Spleen (tissue), 13 donors: ENCODE measurements at regions of chr2 and their contacts with region 1.

Region 1: DNA sequence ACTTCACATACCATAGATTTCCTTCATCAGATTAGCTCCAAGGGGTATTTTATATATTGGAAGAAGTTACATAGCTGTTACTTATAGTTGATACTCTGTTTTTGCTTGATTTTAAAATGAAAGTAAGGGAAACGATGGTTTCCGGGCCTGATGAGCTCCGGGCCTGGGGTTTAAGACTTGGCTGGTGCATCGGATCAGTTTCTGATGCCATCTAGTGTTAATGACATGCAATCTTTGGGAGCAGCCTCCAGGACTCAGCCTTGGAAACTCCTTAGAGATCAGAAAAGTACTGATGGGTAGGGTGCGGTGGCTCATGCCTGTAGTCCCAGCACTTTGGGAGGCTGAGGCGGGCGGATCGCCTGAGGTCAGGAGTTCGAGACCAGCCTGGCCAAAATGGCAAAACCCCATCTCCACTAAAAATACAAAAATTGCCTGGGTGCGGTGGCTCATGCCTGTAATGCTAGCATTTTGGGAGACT is 47.1 kb upstream of the CNOT11 start:
- DNase-seq: no peak
- H3K4me3 ChIP-seq: peak overlapping the region in 2 of 8 donors; percentile 11 to 42
- H3K27ac ChIP-seq: peak overlapping the region in 5 of 8 donors; percentile 9 to 70 (median 39)
- H3K4me1 ChIP-seq: peaks cover 0 to 25% (median 20%) of the 10 kb centered on the region in 6 donors
- H3K27me3 ChIP-seq: no peaks in the 10 kb centered on the region
- CTCF ChIP-seq: peak in 10 of 11 experiments; percentile 32 to 72 (median 60)
- POLR2A ChIP-seq: no peak

Region 2: DNA sequence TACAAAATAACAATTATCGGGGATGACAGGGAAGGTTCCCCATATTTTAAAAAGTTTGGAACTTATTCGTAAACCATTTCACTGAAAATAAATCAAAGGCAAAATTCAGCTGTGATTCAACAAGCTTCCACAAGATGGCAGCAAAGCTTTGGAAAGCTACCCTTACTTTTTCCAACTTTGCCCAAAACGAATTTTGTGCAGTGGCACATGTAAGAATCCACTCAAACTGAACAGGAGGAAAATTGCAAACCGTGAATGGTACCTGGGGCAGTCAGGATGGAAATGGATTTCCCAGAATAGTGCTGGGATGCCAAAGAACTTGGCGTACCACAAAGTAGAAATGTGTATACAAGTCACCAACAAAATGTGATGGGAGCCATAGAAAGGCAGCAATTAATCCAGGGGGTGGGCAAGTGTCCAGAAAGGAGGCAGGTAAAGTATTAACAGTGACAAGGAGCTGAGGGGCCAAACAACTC is 192.8 kb before region 1 on chr2:
- intact Hi-C with region 1: loop called (anchors 10 kb)
- DNase-seq: no peak
- H3K4me3 ChIP-seq: no peak overlapping the region
- H3K27ac ChIP-seq: peak overlapping the region in 1 of 8 donors; percentile 4
- H3K4me1 ChIP-seq: peaks cover 0 to 28% (median 4%) of the 10 kb centered on the region in 6 donors
- H3K27me3 ChIP-seq: no peaks in the 10 kb centered on the region
- CTCF ChIP-seq: peak; percentile 45 to 86 (median 78)
- POLR2A ChIP-seq: no peak

Region 3: DNA sequence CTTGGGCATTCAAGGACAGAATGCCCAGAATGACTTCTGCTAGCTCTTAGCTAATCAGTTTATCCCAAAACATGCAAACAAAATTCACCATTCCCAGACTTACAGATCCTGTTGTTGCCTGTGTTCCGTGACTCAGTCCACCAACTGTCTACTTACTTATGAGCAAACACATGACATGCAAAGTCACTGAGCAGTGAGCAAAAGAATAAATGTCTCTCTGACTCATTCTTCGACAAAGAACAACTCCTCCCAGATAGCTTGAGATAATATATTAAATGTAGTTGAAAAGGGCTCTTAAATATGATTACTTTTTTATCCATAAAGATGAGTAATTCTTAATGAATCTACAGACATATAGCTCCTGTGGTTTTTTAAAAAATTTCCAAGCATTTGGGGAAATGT is 190.8 kb after region 1 on chr2:
- intact Hi-C with region 1: no loop called
- DNase-seq: no peak
- H3K4me3 ChIP-seq: no peak overlapping the region
- H3K27ac ChIP-seq: no peak overlapping the region
- H3K4me1 ChIP-seq: peaks cover 4 to 26% (median 20%) of the 10 kb centered on the region in 6 donors
- H3K27me3 ChIP-seq: peaks cover 0 to 41% (median 0%) of the 10 kb centered on the region in 7 donors
- CTCF ChIP-seq: no peak
- POLR2A ChIP-seq: no peak